ENCODE measurements at regions of chr6 and their contacts with region 1.

Region 1: DNA sequence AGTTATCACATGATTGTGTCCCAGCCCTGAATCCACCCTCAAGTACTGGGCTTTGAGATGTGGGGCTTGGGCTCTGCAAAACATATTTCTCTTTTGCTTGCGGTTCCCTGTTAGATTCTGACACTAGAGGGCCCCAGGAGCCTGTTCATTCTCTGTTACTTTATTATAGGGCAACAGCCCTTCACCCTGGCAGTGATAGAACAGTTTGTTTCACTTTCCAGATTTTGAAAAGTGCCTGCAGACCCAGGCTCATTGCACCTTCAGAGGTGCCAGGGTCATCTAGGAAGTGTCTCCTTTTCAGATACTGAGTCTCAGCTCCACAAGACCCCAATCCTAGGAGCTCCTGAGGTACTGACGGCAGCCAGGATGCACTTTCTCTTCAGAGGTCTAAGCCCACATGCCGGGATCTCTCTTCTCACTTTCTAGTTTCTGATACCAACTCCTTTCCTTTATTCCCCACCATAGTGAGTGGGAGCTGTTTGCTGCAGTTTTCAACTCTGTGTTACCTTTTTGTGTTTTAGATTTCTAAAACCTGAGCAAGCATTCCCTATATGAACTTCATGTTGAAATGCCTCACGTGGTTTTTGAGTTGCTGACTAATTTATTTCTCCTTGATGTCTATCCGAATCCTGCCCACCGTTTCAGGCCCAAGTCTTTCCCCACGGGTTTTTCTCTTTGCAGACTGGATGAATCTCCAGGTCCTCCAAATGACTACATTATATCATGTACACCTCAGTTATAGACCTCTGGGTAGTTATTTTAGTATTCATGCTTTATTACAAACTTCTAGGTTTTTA is 10.9 kb downstream of the ABT1 start:
- DNase-seq: no peak
- ATAC-seq: peak; percentile 74

Region 2: DNA sequence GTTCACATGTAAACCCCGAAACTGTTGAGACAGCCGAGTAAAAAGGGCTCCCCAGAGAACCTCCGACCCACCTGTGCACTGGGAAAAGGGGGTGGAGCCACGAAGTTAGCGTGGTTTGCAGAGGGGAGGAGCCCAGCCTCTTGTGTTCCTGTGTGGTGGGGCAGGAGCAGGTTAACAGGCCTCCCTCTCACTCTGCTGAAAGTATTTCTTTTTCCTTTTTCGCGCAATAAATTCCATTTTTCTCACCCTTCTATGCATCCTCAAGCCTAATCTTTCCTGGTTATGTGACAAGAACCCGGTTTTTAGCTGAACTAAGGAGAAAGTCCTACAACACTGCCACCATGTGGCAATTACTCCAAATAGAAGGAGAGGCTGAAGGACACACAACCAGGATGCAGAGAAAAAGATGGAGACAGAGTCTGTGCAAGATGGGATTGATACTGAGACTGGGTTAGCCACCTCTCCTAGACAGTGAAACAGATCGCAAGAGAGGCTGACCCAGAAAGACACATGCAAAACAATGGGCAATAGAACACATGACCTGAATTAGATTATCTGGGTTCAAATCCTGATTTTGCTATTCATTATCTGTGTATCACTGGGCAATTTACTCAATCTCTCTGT is 471.2 kb after region 1 on chr6:
- intact Hi-C with region 1: loop called (anchors 2 kb)
- DNase-seq: no peak
- ATAC-seq: peak; percentile 73

Region 3: DNA sequence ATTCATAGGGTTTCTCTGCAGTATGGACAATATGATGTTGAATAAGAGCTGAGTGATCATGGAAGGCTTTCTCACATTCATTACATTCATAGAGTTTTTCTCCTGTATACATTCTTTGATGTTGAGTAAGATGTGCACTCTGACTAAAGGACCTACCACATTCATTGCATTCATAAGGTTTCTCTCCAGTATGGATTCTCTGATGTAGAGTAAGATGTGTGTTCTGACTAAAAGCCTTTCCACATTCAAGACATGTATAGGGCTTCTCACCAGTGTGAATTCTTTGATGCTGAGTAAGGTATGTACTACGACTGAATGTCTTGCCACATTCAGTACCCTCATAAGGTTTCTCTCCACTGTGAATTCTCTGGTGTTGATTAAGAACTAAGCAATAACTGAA is 751.6 kb after region 1 on chr6:
- intact Hi-C with region 1: no loop called
- DNase-seq: no peak
- ATAC-seq: no peak

Measured in Right ventricle myocardium superior (tissue), 1 donor.